ENCODE measurements at regions of chr5 and their contacts with region 1.

Region 1: GRCh38 chr5:9207817-9208418 is 338.0 kb downstream of the SEMA5A start:
- DNase-seq: no peak
- H3K4me3 Mint-ChIP-seq: no peak overlapping the region
- H3K27ac Mint-ChIP-seq: no peak overlapping the region
- H3K4me1 Mint-ChIP-seq: no peaks in the 10 kb centered on the region
- H3K27me3 Mint-ChIP-seq: no peaks in the 10 kb centered on the region

Region 2: GRCh38 chr5:7927466-7928375 is 1280.2 kb before region 1 on chr5:
- intact Hi-C with region 1: loop called (anchors 5 kb)
- DNase-seq: no peak
- H3K4me3 Mint-ChIP-seq: no peak overlapping the region
- H3K27ac Mint-ChIP-seq: no peak overlapping the region
- H3K4me1 Mint-ChIP-seq: no peaks in the 10 kb centered on the region
- H3K27me3 Mint-ChIP-seq: peaks cover 3% of the 10 kb centered on the region

Region 3: GRCh38 chr5:9454012-9454481 is 246.1 kb after region 1 on chr5:
- intact Hi-C with region 1: no loop called
- DNase-seq: no peak
- H3K4me3 Mint-ChIP-seq: no peak overlapping the region
- H3K27ac Mint-ChIP-seq: no peak overlapping the region
- H3K4me1 Mint-ChIP-seq: no peaks in the 10 kb centered on the region
- H3K27me3 Mint-ChIP-seq: no peaks in the 10 kb centered on the region

Measured in activated T-helper 2 cell treated with anti-CD3 and anti-CD28 coated beads, Interferon-gamma antibody, Interleukin-2, Interleukin-4, amounts not matched to agents 10 μg/mL and 5 μg/mL and 100 μg/mL, durations not matched to agents 14 hours and 24 hours and 36 hours (primary cell).